ENCODE measurements at regions of chr3 and their contacts with region 1.

Region 1: DNA sequence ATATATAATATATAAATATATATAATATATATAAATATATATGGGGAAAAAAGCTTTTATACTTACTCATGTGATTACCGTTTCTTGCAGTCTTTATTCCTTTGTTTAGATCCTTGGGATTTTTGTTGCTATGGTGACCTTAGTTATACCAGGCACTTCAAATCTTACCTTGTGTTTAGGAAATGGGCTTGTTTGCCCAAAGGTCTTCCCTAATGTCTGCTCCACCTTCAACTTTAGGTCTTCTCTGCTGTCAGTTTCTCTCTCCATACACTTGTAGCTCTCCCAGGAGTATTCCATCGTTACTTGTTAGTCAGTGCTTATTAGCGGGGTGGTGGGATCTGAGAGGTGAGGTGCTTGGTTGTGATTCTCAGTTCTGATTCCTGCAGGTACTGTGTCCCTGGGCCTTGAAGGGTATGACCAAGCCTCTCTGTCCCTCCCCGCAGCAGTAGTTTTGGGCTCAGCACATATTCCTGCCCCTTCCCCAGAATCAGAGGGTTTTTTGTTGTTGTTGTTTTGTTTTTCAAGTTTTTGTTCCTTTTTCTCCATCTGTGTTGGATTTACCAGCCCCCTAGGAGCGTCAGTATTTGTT is 9.6 kb upstream of the LAMP3 start:
- DNase-seq: no peak
- H3K4me3 ChIP-seq: no peak overlapping the region
- H3K4me3 Mint-ChIP-seq: no peak overlapping the region
- H3K27ac Mint-ChIP-seq: no peak overlapping the region
- H3K4me1 ChIP-seq: no peaks in the 10 kb centered on the region
- H3K4me1 Mint-ChIP-seq: no peaks in the 10 kb centered on the region
- H3K27me3 ChIP-seq: no peaks in the 10 kb centered on the region; the same call in 1 of the 2 replicates
- H3K27me3 Mint-ChIP-seq: peaks cover 4% of the 10 kb centered on the region
- CTCF ChIP-seq: no peak

Region 2: GRCh38 chr3:183158551-183159006 is 13.6 kb before region 1 on chr3:
- CTCF ChIA-PET with region 1: no interaction called
- POLR2A ChIA-PET with region 1: no interaction called
- intact Hi-C with region 1: no loop called
- DNase-seq: no peak
- H3K4me3 ChIP-seq: no peak overlapping the region
- H3K4me3 Mint-ChIP-seq: no peak overlapping the region
- H3K27ac Mint-ChIP-seq: no peak overlapping the region
- H3K4me1 ChIP-seq: peaks cover 9% of the 10 kb centered on the region
- H3K4me1 Mint-ChIP-seq: peaks cover 17% of the 10 kb centered on the region
- H3K27me3 ChIP-seq: no peaks in the 10 kb centered on the region
- H3K27me3 Mint-ChIP-seq: no peaks in the 10 kb centered on the region
- CTCF ChIP-seq: no peak

Region 3: GRCh38 chr3:184155644-184156521 is 983.7 kb after region 1 on chr3:
- CTCF ChIA-PET with region 1: no interaction called
- POLR2A ChIA-PET with region 1: interaction called, 11 read pairs
- intact Hi-C with region 1: no loop called
- DNase-seq: peak in 1 of 2 experiments; percentile 53
- H3K4me3 ChIP-seq: peak overlapping the region; percentile 81
- H3K4me3 Mint-ChIP-seq: peak overlapping the region; percentile 98
- H3K27ac Mint-ChIP-seq: peak overlapping the region; percentile 87
- H3K4me1 ChIP-seq: peaks cover 7% of the 10 kb centered on the region; the same call in 1 of the 2 replicates
- H3K4me1 Mint-ChIP-seq: peaks cover 7% of the 10 kb centered on the region
- H3K27me3 ChIP-seq: no peaks in the 10 kb centered on the region
- H3K27me3 Mint-ChIP-seq: no peaks in the 10 kb centered on the region
- CTCF ChIP-seq: no peak

Measured in Caco-2 (cell line).